ENCODE measurements at regions of chr9 and their contacts with region 1.

Region 1: GRCh38 chr9:26502311-26502710 is 390.3 kb downstream of the CAAP1 start:
- DNase-seq: no peak
- H3K4me3 ChIP-seq: no peak overlapping the region
- H3K27ac ChIP-seq: no peak overlapping the region
- H3K4me1 ChIP-seq: no peaks in the 10 kb centered on the region
- H3K27me3 ChIP-seq: no peaks in the 10 kb centered on the region
- CTCF ChIP-seq: peak in 1 of 3 experiments; percentile 36

Region 2: DNA sequence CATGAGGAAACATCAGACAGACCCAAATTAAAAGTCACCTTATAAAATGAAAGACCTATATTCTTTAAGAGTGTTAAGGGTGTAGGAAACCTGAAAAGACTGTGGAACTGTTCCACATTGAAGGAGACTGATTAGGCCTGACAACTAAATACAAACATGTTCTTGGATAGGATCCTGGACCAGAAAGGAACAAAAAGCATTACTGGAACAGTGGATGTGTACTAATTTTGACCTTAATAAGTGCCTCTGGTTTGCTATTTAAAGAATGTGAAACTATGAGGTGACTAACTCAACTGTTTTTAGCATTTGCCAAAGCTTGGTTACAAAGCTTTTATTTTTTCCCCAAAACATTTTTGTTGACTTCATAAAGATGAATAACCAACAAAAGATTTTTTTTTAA is 49.7 kb after region 1 on chr9:
- intact Hi-C with region 1: loop called (anchors 5 kb)
- DNase-seq: no peak
- H3K4me3 ChIP-seq: no peak overlapping the region
- H3K27ac ChIP-seq: peak overlapping the region; percentile 59 to 81
- H3K4me1 ChIP-seq: peaks cover 3 to 18% of the 10 kb centered on the region in 2 donors
- H3K27me3 ChIP-seq: no peaks in the 10 kb centered on the region
- CTCF ChIP-seq: no peak

Region 3: GRCh38 chr9:26612211-26612610 is 109.9 kb after region 1 on chr9:
- intact Hi-C with region 1: loop called (anchors 2 kb)
- DNase-seq: no peak
- H3K4me3 ChIP-seq: no peak overlapping the region
- H3K27ac ChIP-seq: no peak overlapping the region
- H3K4me1 ChIP-seq: no peaks in the 10 kb centered on the region
- H3K27me3 ChIP-seq: no peaks in the 10 kb centered on the region
- CTCF ChIP-seq: no peak

Region 4: GRCh38 chr9:27194401-27195091 is 692.2 kb after region 1 on chr9:
- intact Hi-C with region 1: no loop called
- DNase-seq: no peak
- H3K4me3 ChIP-seq: no peak overlapping the region
- H3K27ac ChIP-seq: peak overlapping the region; percentile 8 to 44
- H3K4me1 ChIP-seq: peaks cover 0 to 9% of the 10 kb centered on the region in 2 donors
- H3K27me3 ChIP-seq: no peaks in the 10 kb centered on the region
- CTCF ChIP-seq: no peak